ENCODE measurements at regions of chr3 and their contacts with region 1.

Region 1: GRCh38 chr3:72745146-72745999 is 102.9 kb downstream of the SHQ1 start:
- DNase-seq: no peak
- ATAC-seq: no peak
- H3K4me3 ChIP-seq: no peak overlapping the region
- H3K27ac ChIP-seq: no peak overlapping the region
- H3K4me1 ChIP-seq: no peaks in the 10 kb centered on the region
- H3K27me3 ChIP-seq: no peaks in the 10 kb centered on the region
- CTCF ChIP-seq: no peak
- EP300 ChIP-seq: no peak
- POLR2A ChIP-seq: no peak
- RAD21 ChIP-seq: no peak

Region 2: GRCh38 chr3:72728988-72729467 is 16.3 kb before region 1 on chr3:
- CTCF ChIA-PET with region 1: no interaction called
- POLR2A ChIA-PET with region 1: no interaction called
- RAD21 ChIA-PET with region 1: no interaction called
- SMC1A ChIA-PET with region 1: no interaction called
- in situ Hi-C with region 1: no loop called
- intact Hi-C with region 1: no loop called
- DNase-seq: no peak
- ATAC-seq: no peak
- H3K4me3 ChIP-seq: no peak overlapping the region
- H3K27ac ChIP-seq: no peak overlapping the region
- H3K4me1 ChIP-seq: no peaks in the 10 kb centered on the region
- H3K27me3 ChIP-seq: no peaks in the 10 kb centered on the region
- CTCF ChIP-seq: no peak
- EP300 ChIP-seq: no peak
- POLR2A ChIP-seq: no peak
- RAD21 ChIP-seq: no peak

Region 3: GRCh38 chr3:72756900-72757299 is 11.5 kb after region 1 on chr3:
- CTCF ChIA-PET with region 1: no interaction called
- POLR2A ChIA-PET with region 1: interaction called, 3 read pairs
- RAD21 ChIA-PET with region 1: no interaction called
- SMC1A ChIA-PET with region 1: interaction called, 13 read pairs
- in situ Hi-C with region 1: no loop called
- intact Hi-C with region 1: no loop called
- DNase-seq: peak; percentile 77
- ATAC-seq: peak; percentile 100
- H3K4me3 ChIP-seq: no peak overlapping the region
- H3K27ac ChIP-seq: peak overlapping the region; percentile 29; the same call in 1 of the 2 replicates
- H3K4me1 ChIP-seq: peaks cover 14% of the 10 kb centered on the region
- H3K27me3 ChIP-seq: no peaks in the 10 kb centered on the region
- CTCF ChIP-seq: no peak
- EP300 ChIP-seq: peak; percentile 67 to 81
- POLR2A ChIP-seq: no peak
- RAD21 ChIP-seq: no peak

Region 4: DNA sequence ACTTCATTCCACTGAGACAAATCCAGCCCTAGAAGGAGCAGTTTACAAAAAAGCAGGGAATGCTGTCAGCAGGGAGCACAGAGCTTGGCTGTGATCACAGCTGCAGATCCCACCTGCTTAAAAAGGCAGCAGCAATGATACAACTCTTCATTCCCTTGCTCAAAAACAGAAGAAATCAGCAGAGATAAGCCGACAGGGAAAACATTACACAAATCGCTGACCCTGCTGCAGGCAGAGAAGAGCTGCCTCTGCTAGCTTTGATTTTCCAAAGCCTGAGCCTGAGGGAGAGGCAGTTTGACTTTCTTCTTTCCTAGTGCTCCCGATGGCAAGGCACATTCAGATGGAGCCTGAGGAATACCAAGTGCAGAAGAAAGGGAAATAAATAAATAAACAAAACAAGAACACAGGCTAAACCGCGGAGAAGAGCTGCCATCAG is 22.7 kb after region 1 on chr3:
- CTCF ChIA-PET with region 1: no interaction called
- POLR2A ChIA-PET with region 1: no interaction called
- RAD21 ChIA-PET with region 1: no interaction called
- SMC1A ChIA-PET with region 1: no interaction called
- in situ Hi-C with region 1: no loop called
- intact Hi-C with region 1: no loop called
- DNase-seq: no peak
- ATAC-seq: no peak
- H3K4me3 ChIP-seq: no peak overlapping the region
- H3K27ac ChIP-seq: no peak overlapping the region
- H3K4me1 ChIP-seq: no peaks in the 10 kb centered on the region
- H3K27me3 ChIP-seq: no peaks in the 10 kb centered on the region
- CTCF ChIP-seq: no peak
- EP300 ChIP-seq: no peak
- POLR2A ChIP-seq: no peak
- RAD21 ChIP-seq: no peak